ENCODE measurements at regions of chr6 and their contacts with region 1.

Region 1: GRCh38 chr6:129236001-129236517 is 353.1 kb downstream of the LAMA2 start:
- DNase-seq: no peak
- CTCF ChIP-seq: no peak

Region 2: GRCh38 chr6:128725271-128726233 is 510.5 kb before region 1 on chr6:
- in situ Hi-C with region 1: loop called (anchors 25 kb)
- DNase-seq: no peak
- CTCF ChIP-seq: peak; percentile 62

Measured in GM13977 (cell line).